Natural killer cell (primary cell): ENCODE measurements at regions of chr19 and their contacts with region 1.

Region 1: GRCh38 chr19:32224371-32225244 is 120.8 kb upstream of the ZNF507 start:
- DNase-seq: peak; percentile 70 to 71
- ATAC-seq: peak; percentile 87 to 99 (median 93)
- H3K4me3 ChIP-seq: peak overlapping the region; percentile 13
- H3K4me3 Mint-ChIP-seq: peak overlapping the region; percentile 68
- H3K27ac ChIP-seq: no peak overlapping the region
- H3K27ac Mint-ChIP-seq: no peak overlapping the region
- H3K4me1 ChIP-seq: peaks cover 11% of the 10 kb centered on the region
- H3K4me1 Mint-ChIP-seq: peaks cover 5 to 6% of the 10 kb centered on the region in 2 donors
- H3K27me3 ChIP-seq: peaks cover 17% of the 10 kb centered on the region
- H3K27me3 Mint-ChIP-seq: peaks cover 6 to 33% of the 10 kb centered on the region in 2 donors
- CTCF ChIP-seq: peak; percentile 100

Region 2: DNA sequence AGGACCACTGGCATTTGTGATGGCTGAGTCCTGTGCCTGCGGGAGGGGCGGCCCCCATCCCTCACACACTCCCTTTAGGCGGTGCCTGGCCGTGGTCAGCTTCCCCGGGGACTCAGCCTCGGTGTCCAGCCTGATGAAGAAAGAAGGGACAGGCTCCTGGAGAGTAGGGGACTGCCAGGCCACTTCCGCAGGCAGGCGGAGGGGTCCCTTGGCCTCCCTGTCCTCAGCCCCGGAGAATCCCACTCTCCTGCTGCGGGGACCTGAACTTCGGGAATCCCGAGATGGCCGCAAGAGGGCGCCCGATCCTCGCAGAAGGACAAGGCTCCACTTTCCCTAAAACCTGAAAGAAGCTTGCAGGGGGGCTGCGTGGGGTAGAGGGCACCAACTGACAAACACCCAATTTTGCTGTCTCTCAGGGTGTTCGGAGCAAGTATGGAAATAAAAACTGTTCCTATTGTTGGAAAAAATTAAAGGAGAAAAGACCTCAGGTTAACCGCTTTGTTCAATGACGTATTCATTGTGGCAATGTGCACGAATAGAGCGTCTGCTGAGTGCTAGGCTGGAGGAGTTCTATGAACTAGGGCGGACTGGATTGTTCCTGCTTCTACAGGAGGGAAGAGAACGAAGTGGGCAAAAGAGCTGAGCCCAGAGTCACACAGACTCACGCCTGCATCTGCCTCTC is 1555.1 kb before region 1 on chr19:
- intact Hi-C with region 1: loop called (anchors 5 kb)
- DNase-seq: peak; percentile 28 to 57
- ATAC-seq: peak in 1 of 3 donors; percentile 25
- H3K4me3 ChIP-seq: no peak overlapping the region
- H3K4me3 Mint-ChIP-seq: no peak overlapping the region
- H3K27ac ChIP-seq: no peak overlapping the region
- H3K27ac Mint-ChIP-seq: no peak overlapping the region
- H3K4me1 ChIP-seq: no peaks in the 10 kb centered on the region
- H3K4me1 Mint-ChIP-seq: no peaks in the 10 kb centered on the region
- H3K27me3 ChIP-seq: peaks cover 5% of the 10 kb centered on the region
- H3K27me3 Mint-ChIP-seq: peaks cover 9 to 36% of the 10 kb centered on the region in 2 donors
- CTCF ChIP-seq: peak; percentile 67

Region 3: DNA sequence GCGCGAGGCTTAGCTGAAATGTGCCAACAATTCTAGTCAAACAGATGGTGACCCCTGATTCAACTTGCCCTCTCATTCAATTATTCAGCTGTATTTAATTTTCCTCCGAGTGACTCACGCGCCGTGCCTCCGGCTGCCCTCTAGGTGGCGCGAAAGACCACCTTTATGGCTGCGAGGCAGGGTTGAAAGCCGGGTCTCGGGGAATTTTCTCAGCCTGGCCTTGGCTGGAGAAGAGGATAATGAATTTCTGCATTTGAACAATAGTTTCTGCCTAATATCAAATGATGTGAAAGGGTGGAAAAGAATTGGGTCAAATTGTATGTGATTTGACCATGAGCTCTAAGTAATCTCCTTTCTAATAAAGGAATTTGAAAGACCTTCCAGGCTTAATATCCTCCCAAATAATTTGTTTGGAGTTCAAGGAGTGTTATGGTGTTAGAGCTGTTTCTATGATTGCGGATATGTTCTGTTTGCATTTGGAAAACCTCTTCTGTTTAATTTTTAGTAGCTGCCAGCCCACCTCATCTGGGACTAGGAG is 1541.5 kb before region 1 on chr19:
- intact Hi-C with region 1: loop called (anchors 1 kb)
- DNase-seq: peak; percentile 25 to 63
- ATAC-seq: peak in 2 of 3 donors; percentile 38 to 67
- H3K4me3 ChIP-seq: no peak overlapping the region
- H3K4me3 Mint-ChIP-seq: no peak overlapping the region
- H3K27ac ChIP-seq: no peak overlapping the region
- H3K27ac Mint-ChIP-seq: no peak overlapping the region
- H3K4me1 ChIP-seq: no peaks in the 10 kb centered on the region
- H3K4me1 Mint-ChIP-seq: no peaks in the 10 kb centered on the region
- H3K27me3 ChIP-seq: no peaks in the 10 kb centered on the region
- H3K27me3 Mint-ChIP-seq: peaks cover 32 to 50% of the 10 kb centered on the region in 2 donors
- CTCF ChIP-seq: peak; percentile 81

Region 4: DNA sequence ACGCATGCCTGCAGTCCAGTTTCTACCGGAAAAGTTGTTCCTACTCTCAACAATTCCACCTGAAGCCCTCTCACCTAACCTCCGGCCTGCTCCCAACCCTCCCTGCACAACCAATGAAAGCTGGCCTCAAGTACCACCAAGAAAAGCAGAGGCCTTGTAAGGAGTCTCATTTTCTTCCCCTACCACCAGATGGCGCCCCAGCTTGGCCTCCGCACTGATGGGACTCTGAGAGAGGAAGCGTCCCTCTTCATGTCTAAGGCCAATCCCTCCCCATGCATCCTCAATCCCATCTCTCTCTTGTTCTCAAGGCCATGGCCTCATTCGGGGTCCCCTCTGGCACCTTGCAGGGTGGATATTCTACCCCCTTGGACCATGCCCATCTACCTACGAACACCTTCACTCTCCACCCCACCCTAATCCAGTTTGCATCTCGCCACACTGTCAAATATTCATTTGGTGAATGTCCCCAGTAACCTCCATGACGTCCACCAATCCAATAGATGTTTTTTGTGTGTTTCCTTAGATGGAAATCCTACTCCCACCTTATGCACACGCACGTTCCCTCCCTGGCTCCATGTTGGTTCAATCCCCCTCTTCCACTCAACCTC is 1439.7 kb before region 1 on chr19:
- intact Hi-C with region 1: loop called (anchors 1 kb)
- DNase-seq: peak; percentile 61 to 71
- ATAC-seq: peak in 2 of 3 donors; percentile 44 to 67
- H3K4me3 ChIP-seq: no peak overlapping the region
- H3K4me3 Mint-ChIP-seq: no peak overlapping the region
- H3K27ac ChIP-seq: no peak overlapping the region
- H3K27ac Mint-ChIP-seq: no peak overlapping the region
- H3K4me1 ChIP-seq: no peaks in the 10 kb centered on the region
- H3K4me1 Mint-ChIP-seq: no peaks in the 10 kb centered on the region
- H3K27me3 ChIP-seq: no peaks in the 10 kb centered on the region
- H3K27me3 Mint-ChIP-seq: peaks cover 2 to 7% of the 10 kb centered on the region in 2 donors
- CTCF ChIP-seq: peak; percentile 68

Region 5: GRCh38 chr19:32387701-32388392 is 163.2 kb after region 1 on chr19:
- intact Hi-C with region 1: no loop called
- DNase-seq: no peak
- ATAC-seq: no peak
- H3K4me3 ChIP-seq: no peak overlapping the region
- H3K4me3 Mint-ChIP-seq: no peak overlapping the region
- H3K27ac ChIP-seq: no peak overlapping the region
- H3K27ac Mint-ChIP-seq: peak overlapping the region in 1 of 2 donors; percentile 13
- H3K4me1 ChIP-seq: no peaks in the 10 kb centered on the region
- H3K4me1 Mint-ChIP-seq: peaks cover 0 to 2% of the 10 kb centered on the region in 2 donors
- H3K27me3 ChIP-seq: no peaks in the 10 kb centered on the region
- H3K27me3 Mint-ChIP-seq: no peaks in the 10 kb centered on the region
- CTCF ChIP-seq: no peak

Region 6: DNA sequence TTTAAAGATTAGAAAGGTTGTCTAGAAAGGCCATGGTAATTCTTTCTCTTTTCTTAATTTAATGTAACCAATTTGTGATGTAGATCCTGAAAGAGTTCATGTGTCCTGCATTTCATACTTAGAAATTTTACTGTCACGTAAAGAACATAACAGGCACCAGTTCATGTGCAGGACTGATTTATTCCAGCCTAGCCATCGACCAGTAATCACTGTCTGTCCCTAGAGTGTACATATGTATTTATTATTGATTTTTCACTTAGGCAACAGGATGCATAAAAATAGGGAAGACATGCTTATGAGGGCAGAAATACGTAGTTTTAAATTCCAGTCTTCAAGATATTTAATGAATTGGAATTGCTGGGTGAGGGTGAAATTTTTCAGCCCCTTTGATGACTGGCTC is 532.6 kb after region 1 on chr19:
- intact Hi-C with region 1: no loop called
- DNase-seq: no peak
- ATAC-seq: no peak
- H3K4me3 ChIP-seq: no peak overlapping the region
- H3K4me3 Mint-ChIP-seq: no peak overlapping the region
- H3K27ac ChIP-seq: no peak overlapping the region
- H3K27ac Mint-ChIP-seq: no peak overlapping the region
- H3K4me1 ChIP-seq: no peaks in the 10 kb centered on the region
- H3K4me1 Mint-ChIP-seq: no peaks in the 10 kb centered on the region
- H3K27me3 ChIP-seq: peaks cover 4% of the 10 kb centered on the region
- H3K27me3 Mint-ChIP-seq: peaks cover 6 to 7% of the 10 kb centered on the region in 2 donors
- CTCF ChIP-seq: no peak